ENCODE measurements at regions of chr9 and their contacts with region 1.

Region 1: GRCh38 chr9:28464481-28465216 is 891.4 kb upstream of the C9orf72 start:
- DNase-seq: no peak
- ATAC-seq: no peak
- H3K4me3 ChIP-seq: no peak overlapping the region
- H3K27ac ChIP-seq: no peak overlapping the region
- H3K4me1 ChIP-seq: no peaks in the 10 kb centered on the region
- H3K27me3 ChIP-seq: no peaks in the 10 kb centered on the region

Region 2: DNA sequence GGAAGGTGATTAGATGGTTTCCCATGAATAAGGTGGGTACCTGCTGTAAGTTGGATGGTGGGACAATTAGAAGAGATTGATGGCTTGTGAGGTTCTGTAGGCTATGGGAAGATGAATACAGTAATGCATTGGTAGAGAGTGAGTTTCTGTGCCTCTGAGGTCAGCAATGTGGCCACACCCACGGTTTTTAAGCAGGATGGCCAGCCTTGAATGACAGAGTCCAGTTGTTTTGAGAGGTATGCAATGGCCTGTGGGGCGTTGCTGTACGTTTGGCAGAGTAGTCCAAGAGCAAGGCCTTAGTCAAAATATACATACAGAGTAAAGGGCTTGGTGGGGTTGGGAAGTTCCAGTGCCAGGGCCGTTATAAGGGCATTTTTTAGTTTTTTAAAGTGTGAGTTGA is 655.8 kb before region 1 on chr9:
- intact Hi-C with region 1: no loop called
- DNase-seq: no peak
- ATAC-seq: no peak
- H3K4me3 ChIP-seq: no peak overlapping the region
- H3K27ac ChIP-seq: no peak overlapping the region
- H3K4me1 ChIP-seq: no peaks in the 10 kb centered on the region
- H3K27me3 ChIP-seq: no peaks in the 10 kb centered on the region

Region 3: DNA sequence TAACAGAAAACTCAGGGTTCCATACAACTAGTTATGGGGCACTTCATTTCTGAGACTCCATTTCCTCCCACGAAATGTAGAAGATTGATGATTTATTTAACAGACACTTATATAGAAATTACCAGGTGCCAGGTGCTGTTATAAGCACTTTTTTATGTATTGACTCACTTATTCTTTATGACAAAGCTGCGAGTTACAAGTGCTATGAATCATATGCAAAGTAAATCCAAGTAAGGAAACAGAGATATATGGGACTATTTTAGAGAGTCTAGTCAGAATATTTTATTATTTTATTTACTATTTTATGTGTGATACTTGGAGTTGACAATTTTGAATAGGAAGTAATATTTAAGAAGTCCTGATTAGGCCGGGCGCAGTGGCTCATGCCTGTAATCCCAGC is 68.6 kb before region 1 on chr9:
- intact Hi-C with region 1: no loop called
- DNase-seq: no peak
- ATAC-seq: no peak
- H3K4me3 ChIP-seq: no peak overlapping the region
- H3K27ac ChIP-seq: no peak overlapping the region
- H3K4me1 ChIP-seq: no peaks in the 10 kb centered on the region
- H3K27me3 ChIP-seq: no peaks in the 10 kb centered on the region

Region 4: GRCh38 chr9:28528049-28528448 is 63.4 kb after region 1 on chr9:
- intact Hi-C with region 1: loop called in 1 of 2 experiments (anchors 10 kb)
- DNase-seq: no peak
- ATAC-seq: no peak
- H3K4me3 ChIP-seq: no peak overlapping the region
- H3K27ac ChIP-seq: no peak overlapping the region
- H3K4me1 ChIP-seq: no peaks in the 10 kb centered on the region
- H3K27me3 ChIP-seq: no peaks in the 10 kb centered on the region

Region 5: GRCh38 chr9:28583832-28584231 is 119.2 kb after region 1 on chr9:
- intact Hi-C with region 1: no loop called
- DNase-seq: no peak
- ATAC-seq: no peak
- H3K4me3 ChIP-seq: no peak overlapping the region
- H3K27ac ChIP-seq: no peak overlapping the region
- H3K4me1 ChIP-seq: no peaks in the 10 kb centered on the region
- H3K27me3 ChIP-seq: no peaks in the 10 kb centered on the region